ENCODE measurements at regions of chr4 and their contacts with region 1.

Region 1: DNA sequence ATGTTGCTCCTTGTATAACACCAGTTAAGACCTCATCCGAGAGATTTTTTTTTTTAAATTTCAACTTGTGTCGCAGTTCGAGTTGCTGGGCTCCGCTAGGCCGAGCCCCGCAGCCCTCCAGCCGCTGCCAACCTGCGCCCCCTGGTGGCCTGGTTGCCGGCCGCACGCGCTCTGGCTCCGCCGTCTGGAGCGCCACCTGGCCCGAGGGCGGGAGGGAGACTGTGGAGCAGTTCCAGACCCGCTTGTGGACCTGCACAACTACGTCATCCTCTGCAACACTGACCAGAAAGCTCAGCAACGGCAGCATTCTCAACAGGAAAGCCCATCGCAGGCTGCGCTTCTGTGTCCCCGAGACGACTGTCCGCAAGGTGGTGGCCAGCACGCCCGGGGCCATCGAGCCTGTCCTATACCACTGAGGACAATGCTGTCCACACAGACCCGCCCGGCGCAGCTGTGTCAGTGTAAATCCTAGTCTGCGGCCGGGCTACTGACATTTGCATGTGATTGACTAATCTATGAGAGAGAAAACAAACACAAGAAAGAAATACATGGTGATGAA is 39.1 kb downstream of the ARL9 start:
- DNase-seq: peak; percentile 86
- CTCF ChIP-seq: peak; percentile 100

Region 2: DNA sequence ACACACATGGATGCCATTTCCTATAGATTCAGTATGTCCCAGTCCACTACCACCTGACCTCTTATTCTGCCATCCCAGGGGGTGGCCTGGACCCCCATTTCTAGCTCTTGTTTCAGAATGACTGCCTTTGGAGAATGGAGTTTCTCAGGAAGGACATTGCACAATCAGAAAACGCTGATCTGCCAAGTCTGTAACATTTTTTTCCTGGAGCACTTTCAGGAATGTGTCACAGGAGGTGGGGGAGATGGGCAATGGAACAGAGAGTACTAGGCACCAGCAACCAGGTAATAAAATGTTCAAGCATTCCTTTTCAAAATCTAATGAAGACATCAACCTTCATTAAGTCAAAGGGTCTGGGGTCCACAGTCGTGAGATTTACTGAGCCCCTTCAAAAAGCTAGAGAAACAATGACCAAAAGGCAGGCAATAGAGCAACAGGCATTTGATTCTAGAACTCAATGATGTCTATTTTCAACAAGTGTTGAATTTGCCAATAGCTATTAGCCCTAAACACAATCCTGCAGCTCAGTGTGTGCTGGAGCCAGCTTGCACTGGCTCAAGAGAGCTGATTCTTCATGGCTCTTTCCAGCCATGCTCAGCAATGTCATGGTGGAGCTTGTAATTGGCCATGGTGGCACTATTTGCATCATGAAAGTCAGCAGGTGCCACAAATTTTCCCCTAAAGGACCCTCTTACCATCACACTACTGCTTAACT is 1506.3 kb before region 1 on chr4:
- CTCF ChIA-PET with region 1: no interaction called
- POLR2A ChIA-PET with region 1: no interaction called
- DNase-seq: no peak
- CTCF ChIP-seq: no peak

Region 3: GRCh38 chr4:55554453-55555030 is 990.1 kb before region 1 on chr4:
- CTCF ChIA-PET with region 1: no interaction called
- POLR2A ChIA-PET with region 1: no interaction called
- DNase-seq: peak; percentile 26
- CTCF ChIP-seq: peak; percentile 28

Region 4: GRCh38 chr4:56530269-56531148 is 14.1 kb before region 1 on chr4:
- CTCF ChIA-PET with region 1: interaction called, 15 read pairs
- POLR2A ChIA-PET with region 1: no interaction called
- DNase-seq: peak; percentile 83
- CTCF ChIP-seq: no peak